B cell (primary cell): ENCODE measurements at regions of chr2 and their contacts with region 1.

Region 1: GRCh38 chr2:223993621-223994232 is 36.5 kb downstream of the MRPL44 start:
- DNase-seq: peak; percentile 78
- ATAC-seq: peak; percentile 43
- H3K4me3 ChIP-seq: no peak overlapping the region
- H3K4me3 Mint-ChIP-seq: no peak overlapping the region
- H3K27ac ChIP-seq: no peak overlapping the region
- H3K27ac Mint-ChIP-seq: no peak overlapping the region
- H3K4me1 ChIP-seq: no peaks in the 10 kb centered on the region
- H3K4me1 Mint-ChIP-seq: no peaks in the 10 kb centered on the region
- H3K27me3 ChIP-seq: no peaks in the 10 kb centered on the region
- H3K27me3 Mint-ChIP-seq: no peaks in the 10 kb centered on the region
- CTCF ChIP-seq: peak; percentile 85

Region 2: GRCh38 chr2:223976635-223977226 is 17.0 kb before region 1 on chr2:
- CTCF ChIA-PET with region 1: interaction called, 61 read pairs
- POLR2A ChIA-PET with region 1: no interaction called
- intact Hi-C with region 1: loop called (anchors 2 kb)
- DNase-seq: no peak
- ATAC-seq: no peak
- H3K4me3 ChIP-seq: no peak overlapping the region
- H3K4me3 Mint-ChIP-seq: no peak overlapping the region
- H3K27ac ChIP-seq: no peak overlapping the region
- H3K27ac Mint-ChIP-seq: no peak overlapping the region
- H3K4me1 ChIP-seq: no peaks in the 10 kb centered on the region
- H3K4me1 Mint-ChIP-seq: no peaks in the 10 kb centered on the region
- H3K27me3 ChIP-seq: no peaks in the 10 kb centered on the region
- H3K27me3 Mint-ChIP-seq: no peaks in the 10 kb centered on the region
- CTCF ChIP-seq: no peak

Region 3: GRCh38 chr2:224025874-224026273 is 32.1 kb after region 1 on chr2:
- CTCF ChIA-PET with region 1: interaction called, 31 read pairs
- POLR2A ChIA-PET with region 1: no interaction called
- intact Hi-C with region 1: no loop called
- DNase-seq: peak; percentile 90
- ATAC-seq: peak; percentile 97
- H3K4me3 ChIP-seq: peak overlapping the region in 2 of 5 experiments; percentile 2 to 40
- H3K4me3 Mint-ChIP-seq: peak overlapping the region; percentile 57
- H3K27ac ChIP-seq: peak overlapping the region; percentile 43 to 44
- H3K27ac Mint-ChIP-seq: peak overlapping the region; percentile 74
- H3K4me1 ChIP-seq: peaks cover 36% of the 10 kb centered on the region in 2 donors
- H3K4me1 Mint-ChIP-seq: peaks cover 40% of the 10 kb centered on the region
- H3K27me3 ChIP-seq: no peaks in the 10 kb centered on the region
- H3K27me3 Mint-ChIP-seq: no peaks in the 10 kb centered on the region
- CTCF ChIP-seq: no peak

Region 4: GRCh38 chr2:224278531-224278930 is 284.8 kb after region 1 on chr2:
- CTCF ChIA-PET with region 1: interaction called, 307 read pairs
- POLR2A ChIA-PET with region 1: no interaction called
- intact Hi-C with region 1: no loop called
- DNase-seq: no peak
- ATAC-seq: no peak
- H3K4me3 ChIP-seq: no peak overlapping the region
- H3K4me3 Mint-ChIP-seq: no peak overlapping the region
- H3K27ac ChIP-seq: no peak overlapping the region
- H3K27ac Mint-ChIP-seq: no peak overlapping the region
- H3K4me1 ChIP-seq: no peaks in the 10 kb centered on the region
- H3K4me1 Mint-ChIP-seq: no peaks in the 10 kb centered on the region
- H3K27me3 ChIP-seq: peaks cover 0 to 6% (median 0%) of the 10 kb centered on the region in 4 experiments
- H3K27me3 Mint-ChIP-seq: peaks cover 27% of the 10 kb centered on the region
- CTCF ChIP-seq: no peak

Region 5: GRCh38 chr2:224369028-224369632 is 375.4 kb after region 1 on chr2:
- CTCF ChIA-PET with region 1: interaction called, 10 read pairs
- POLR2A ChIA-PET with region 1: no interaction called
- intact Hi-C with region 1: no loop called
- DNase-seq: peak; percentile 58
- ATAC-seq: no peak
- H3K4me3 ChIP-seq: no peak overlapping the region
- H3K4me3 Mint-ChIP-seq: no peak overlapping the region
- H3K27ac ChIP-seq: no peak overlapping the region
- H3K27ac Mint-ChIP-seq: no peak overlapping the region
- H3K4me1 ChIP-seq: no peaks in the 10 kb centered on the region
- H3K4me1 Mint-ChIP-seq: no peaks in the 10 kb centered on the region
- H3K27me3 ChIP-seq: no peaks in the 10 kb centered on the region
- H3K27me3 Mint-ChIP-seq: no peaks in the 10 kb centered on the region
- CTCF ChIP-seq: peak; percentile 81